HCT116 (cell line): ENCODE measurements at regions of chr16 and their contacts with region 1.

Region 1: DNA sequence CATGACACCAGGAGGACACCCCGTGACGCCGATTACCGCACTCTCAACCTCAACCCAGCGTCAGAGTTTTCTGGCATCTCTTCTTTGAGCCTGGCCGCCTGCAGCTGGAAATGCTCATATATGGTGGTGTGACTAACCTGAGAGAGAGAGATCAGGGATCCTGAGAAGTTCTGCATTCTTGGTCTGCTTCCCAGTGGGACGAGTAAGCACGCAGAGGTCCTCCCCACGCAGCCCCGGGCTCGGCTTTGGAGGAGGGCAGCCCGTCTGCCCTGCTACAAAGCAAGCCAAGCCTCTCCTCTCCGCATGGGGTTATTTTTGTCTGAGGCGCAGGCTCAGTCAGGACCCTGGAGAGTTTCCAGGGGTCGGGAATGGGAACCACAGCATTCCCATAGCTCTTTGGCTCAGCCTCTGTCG is 16.5 kb downstream of the CRISPLD2 start:
- DNase-seq: no peak
- ATAC-seq: peak; percentile 6; the same call in 1 of the 2 replicates
- H3K4me3 ChIP-seq: no peak overlapping the region
- H3K27ac ChIP-seq: no peak overlapping the region
- H3K4me1 ChIP-seq: peaks cover 44 to 57% of the 10 kb centered on the region in 2 experiments
- H3K27me3 ChIP-seq: no peaks in the 10 kb centered on the region
- CTCF ChIP-seq: no peak
- POLR2A ChIP-seq: no peak
- RAD21 ChIP-seq: no peak

Region 2: DNA sequence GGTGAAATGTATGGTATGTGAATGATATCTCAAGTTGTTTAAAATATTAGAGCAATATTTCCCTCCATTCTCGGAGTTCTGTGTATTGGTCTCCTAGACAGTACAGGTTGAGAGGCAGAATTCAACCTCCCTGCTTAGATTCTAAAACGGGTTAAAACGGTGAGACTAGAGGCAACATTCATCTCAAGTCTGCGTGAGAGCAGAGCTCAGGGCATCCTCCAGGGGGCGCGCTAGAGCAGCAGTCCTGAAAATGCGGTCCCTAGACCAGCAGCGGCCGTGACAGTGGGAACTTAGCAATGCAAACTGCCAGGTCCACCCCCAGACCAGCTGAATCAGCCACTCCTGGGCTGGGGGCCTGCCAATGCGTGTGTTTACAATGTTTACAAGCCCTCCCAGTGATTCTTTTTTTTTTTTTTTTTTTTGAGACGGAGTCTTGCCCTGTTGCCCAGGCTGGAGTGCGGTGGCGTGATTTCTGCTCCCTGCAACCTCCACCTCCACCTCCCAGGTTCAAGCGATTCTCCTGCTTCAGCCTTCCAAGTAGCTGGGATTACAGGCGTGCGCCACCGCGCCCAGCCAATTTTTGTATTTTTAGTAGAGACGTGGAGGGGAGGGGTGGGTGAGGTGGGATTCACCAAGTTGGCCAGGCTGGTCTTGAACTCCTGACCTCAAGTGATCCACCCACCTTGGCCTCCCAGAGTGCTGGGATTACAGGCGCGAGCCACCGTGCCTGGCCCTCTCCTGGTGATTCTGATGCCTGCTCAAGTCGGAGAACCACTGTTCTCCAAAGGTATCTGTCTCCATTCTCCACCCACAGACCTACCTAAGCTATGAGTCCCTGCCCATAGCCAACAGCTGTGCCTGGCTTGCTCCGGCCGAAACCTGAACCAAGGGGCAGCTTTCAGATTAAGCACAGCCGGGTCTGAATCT is 163.7 kb before region 1 on chr16:
- CTCF ChIA-PET with region 1: no interaction called
- POLR2A ChIA-PET with region 1: no interaction called
- RAD21 ChIA-PET with region 1: no interaction called
- intact Hi-C with region 1: no loop called
- DNase-seq: peak; percentile 48
- ATAC-seq: peak; percentile 96
- H3K4me3 ChIP-seq: no peak overlapping the region
- H3K27ac ChIP-seq: no peak overlapping the region
- H3K4me1 ChIP-seq: peaks cover 0 to 5% of the 10 kb centered on the region in 2 experiments; a peak in 1 of 4 replicates
- H3K27me3 ChIP-seq: peaks cover 13% of the 10 kb centered on the region; the same call in 1 of the 2 replicates
- CTCF ChIP-seq: peak; percentile 85 to 97 (median 95)
- POLR2A ChIP-seq: no peak
- RAD21 ChIP-seq: peak; percentile 72

Region 3: GRCh38 chr16:84819644-84820324 is 16.5 kb before region 1 on chr16 and contains the start of gene CRISPLD2:
- CTCF ChIA-PET with region 1: no interaction called
- POLR2A ChIA-PET with region 1: interaction called, 40 read pairs
- RAD21 ChIA-PET with region 1: interaction called in 1 of 2 experiments, 3 read pairs
- intact Hi-C with region 1: no loop called
- DNase-seq: peak; percentile 81
- ATAC-seq: peak; percentile 99
- H3K4me3 ChIP-seq: peak within 1 kb of the TSS; percentile 38 to 64
- H3K27ac ChIP-seq: no peak within 1 kb of the TSS
- H3K4me1 ChIP-seq: peaks cover 7 to 15% of the 10 kb centered on the region in 2 experiments
- H3K27me3 ChIP-seq: no peaks in the 10 kb centered on the region
- CTCF ChIP-seq: no peak
- POLR2A ChIP-seq: peak; percentile 89
- RAD21 ChIP-seq: no peak
- total RNA-seq, gene CRISPLD2: 4.6 TPM

Region 4: GRCh38 chr16:85498273-85499006 is 662.2 kb after region 1 on chr16:
- CTCF ChIA-PET with region 1: no interaction called
- POLR2A ChIA-PET with region 1: no interaction called
- RAD21 ChIA-PET with region 1: no interaction called
- intact Hi-C with region 1: no loop called
- DNase-seq: no peak
- ATAC-seq: no peak
- H3K4me3 ChIP-seq: no peak overlapping the region
- H3K27ac ChIP-seq: no peak overlapping the region
- H3K4me1 ChIP-seq: no peaks in the 10 kb centered on the region
- H3K27me3 ChIP-seq: no peaks in the 10 kb centered on the region
- CTCF ChIP-seq: no peak
- POLR2A ChIP-seq: no peak
- RAD21 ChIP-seq: no peak